ENCODE measurements at regions of chr11 and their contacts with region 1.

Region 1: DNA sequence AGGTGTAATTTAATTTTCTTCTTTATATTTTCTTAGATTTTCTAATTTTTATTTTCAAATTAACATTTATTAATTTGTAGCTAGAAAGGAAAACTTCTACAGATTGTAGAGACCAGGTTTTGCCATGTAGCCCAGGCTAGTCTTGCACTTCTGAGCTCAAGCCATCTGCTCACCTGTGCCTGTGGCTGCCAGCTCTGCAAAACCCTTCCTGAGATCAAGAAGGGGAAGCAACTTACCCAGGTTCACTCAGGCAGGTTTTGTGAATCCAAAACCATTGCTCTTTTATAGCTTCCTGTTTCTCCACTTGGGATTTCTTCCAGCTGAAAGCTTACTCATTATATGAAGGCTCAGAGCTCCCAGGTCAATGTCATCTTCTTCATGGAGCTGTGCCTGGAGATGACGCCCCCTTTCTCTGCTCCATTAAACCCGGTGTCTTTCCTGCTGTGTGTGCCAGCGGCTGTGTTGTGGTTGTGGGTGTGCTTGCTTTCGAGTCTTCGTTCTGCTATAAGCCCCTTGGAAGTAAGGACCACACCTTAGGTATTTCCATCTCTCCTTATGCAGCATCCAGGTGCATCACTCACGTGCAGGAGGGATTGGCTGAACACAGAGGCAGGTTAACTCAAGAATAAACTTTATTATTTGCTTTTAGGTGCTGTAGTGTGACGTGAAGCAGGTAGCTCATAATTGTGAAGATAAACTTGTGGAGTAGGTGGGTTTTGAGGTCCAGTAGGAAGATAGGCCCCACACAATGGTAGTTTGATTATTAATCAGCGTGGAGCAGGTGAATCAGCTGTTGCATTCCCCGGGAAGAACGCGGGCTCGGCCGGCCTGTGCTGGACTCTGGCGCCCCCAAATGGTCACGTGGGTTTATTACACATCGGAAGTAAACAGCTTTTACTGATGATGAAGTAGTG is 42.2 kb upstream of the INCENP start:
- DNase-seq: peak; percentile 62 to 85 (median 77)
- ATAC-seq: peak; percentile 96
- H3K4me3 ChIP-seq: no peak overlapping the region
- H3K4me3 Mint-ChIP-seq: peak overlapping the region in 9 of 10 donors; percentile 40 to 70 (median 55)
- H3K27ac ChIP-seq: no peak overlapping the region
- H3K27ac Mint-ChIP-seq: peak overlapping the region in 6 of 9 donors; percentile 10 to 91 (median 76)
- H3K4me1 ChIP-seq: peaks cover 0 to 7% of the 10 kb centered on the region in 2 donors
- H3K4me1 Mint-ChIP-seq: peaks cover 0 to 13% (median 6%) of the 10 kb centered on the region in 7 donors
- H3K27me3 ChIP-seq: no peaks in the 10 kb centered on the region
- H3K27me3 Mint-ChIP-seq: peaks cover 0 to 9% (median 0%) of the 10 kb centered on the region in 5 donors

Region 2: GRCh38 chr11:61871158-61871597 is 210.5 kb before region 1 on chr11:
- CTCF ChIA-PET with region 1: interaction called, 4 read pairs
- POLR2A ChIA-PET with region 1: no interaction called
- intact Hi-C with region 1: loop called in 1 of 2 experiments (anchors 1 kb)
- DNase-seq: peak; percentile 23 to 77 (median 50)
- ATAC-seq: peak; percentile 94
- H3K4me3 ChIP-seq: no peak overlapping the region
- H3K4me3 Mint-ChIP-seq: peak overlapping the region; percentile 34 to 87 (median 70)
- H3K27ac ChIP-seq: no peak overlapping the region
- H3K27ac Mint-ChIP-seq: peak overlapping the region in 3 of 9 donors; percentile 43 to 52 (median 46)
- H3K4me1 ChIP-seq: no peaks in the 10 kb centered on the region
- H3K4me1 Mint-ChIP-seq: peaks cover 0 to 8% (median 5%) of the 10 kb centered on the region in 7 donors
- H3K27me3 ChIP-seq: no peaks in the 10 kb centered on the region
- H3K27me3 Mint-ChIP-seq: peaks cover 0 to 8% (median 0%) of the 10 kb centered on the region in 5 donors

Region 3: GRCh38 chr11:61899146-61899841 is 182.3 kb before region 1 on chr11:
- CTCF ChIA-PET with region 1: interaction called, 206 read pairs
- POLR2A ChIA-PET with region 1: interaction called, 5 read pairs
- intact Hi-C with region 1: loop called (anchors 1 kb)
- DNase-seq: peak; percentile 88 to 98 (median 93)
- ATAC-seq: peak; percentile 98
- H3K4me3 ChIP-seq: no peak overlapping the region
- H3K4me3 Mint-ChIP-seq: no peak overlapping the region
- H3K27ac ChIP-seq: no peak overlapping the region
- H3K27ac Mint-ChIP-seq: peak overlapping the region; percentile 55 to 93 (median 69)
- H3K4me1 ChIP-seq: peaks cover 4% of the 10 kb centered on the region in 2 donors
- H3K4me1 Mint-ChIP-seq: peaks cover 4 to 7% (median 5%) of the 10 kb centered on the region in 7 donors
- H3K27me3 ChIP-seq: no peaks in the 10 kb centered on the region
- H3K27me3 Mint-ChIP-seq: peaks cover 0 to 4% (median 0%) of the 10 kb centered on the region in 5 donors

Region 4: DNA sequence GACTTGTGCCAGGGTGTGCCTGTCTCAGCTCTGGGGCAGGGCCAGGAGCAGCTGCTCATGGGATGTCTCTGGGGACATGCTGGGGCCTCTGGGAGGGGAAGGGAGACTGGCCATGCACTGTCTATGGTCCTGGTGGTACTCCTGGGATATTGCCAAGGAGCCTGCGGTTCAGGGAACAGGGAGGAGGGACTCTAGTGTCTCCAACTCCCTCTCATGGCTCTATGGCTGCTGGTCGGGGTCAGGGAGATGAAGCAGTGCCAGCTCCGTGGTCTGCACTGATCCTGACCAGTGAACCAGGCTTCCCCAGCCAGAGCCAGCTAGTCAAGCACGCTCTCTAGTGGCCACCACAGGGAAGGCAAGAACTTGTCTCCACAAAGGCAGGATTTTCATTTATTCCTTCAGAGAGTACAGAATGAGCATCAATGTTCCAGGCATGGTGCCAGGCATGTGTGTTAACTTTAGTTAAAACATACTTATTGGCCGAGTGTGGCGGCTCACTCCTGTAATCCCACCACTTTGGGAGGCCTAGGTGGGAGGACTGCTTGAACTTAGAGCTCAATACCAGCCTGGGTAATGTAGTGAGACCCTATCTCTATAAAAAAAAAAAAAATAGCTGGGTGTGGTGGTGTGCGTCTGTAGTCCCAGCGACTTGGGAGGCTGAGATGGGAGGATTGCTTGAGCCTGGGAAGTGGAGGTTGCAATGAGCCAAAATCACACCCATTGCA is 134.0 kb before region 1 on chr11:
- CTCF ChIA-PET with region 1: interaction called, 34 read pairs
- POLR2A ChIA-PET with region 1: interaction called, 3 read pairs
- intact Hi-C with region 1: loop called (anchors 1 to 2 kb)
- DNase-seq: peak; percentile 41 to 64 (median 47)
- ATAC-seq: peak; percentile 88
- H3K4me3 ChIP-seq: no peak overlapping the region
- H3K4me3 Mint-ChIP-seq: no peak overlapping the region
- H3K27ac ChIP-seq: no peak overlapping the region
- H3K27ac Mint-ChIP-seq: peak overlapping the region in 2 of 9 donors; percentile 14 to 70
- H3K4me1 ChIP-seq: peaks cover 0 to 3% of the 10 kb centered on the region in 2 donors
- H3K4me1 Mint-ChIP-seq: peaks cover 0 to 5% (median 0%) of the 10 kb centered on the region in 7 donors
- H3K27me3 ChIP-seq: no peaks in the 10 kb centered on the region
- H3K27me3 Mint-ChIP-seq: peaks cover 0 to 6% (median 3%) of the 10 kb centered on the region in 5 donors

Region 5: DNA sequence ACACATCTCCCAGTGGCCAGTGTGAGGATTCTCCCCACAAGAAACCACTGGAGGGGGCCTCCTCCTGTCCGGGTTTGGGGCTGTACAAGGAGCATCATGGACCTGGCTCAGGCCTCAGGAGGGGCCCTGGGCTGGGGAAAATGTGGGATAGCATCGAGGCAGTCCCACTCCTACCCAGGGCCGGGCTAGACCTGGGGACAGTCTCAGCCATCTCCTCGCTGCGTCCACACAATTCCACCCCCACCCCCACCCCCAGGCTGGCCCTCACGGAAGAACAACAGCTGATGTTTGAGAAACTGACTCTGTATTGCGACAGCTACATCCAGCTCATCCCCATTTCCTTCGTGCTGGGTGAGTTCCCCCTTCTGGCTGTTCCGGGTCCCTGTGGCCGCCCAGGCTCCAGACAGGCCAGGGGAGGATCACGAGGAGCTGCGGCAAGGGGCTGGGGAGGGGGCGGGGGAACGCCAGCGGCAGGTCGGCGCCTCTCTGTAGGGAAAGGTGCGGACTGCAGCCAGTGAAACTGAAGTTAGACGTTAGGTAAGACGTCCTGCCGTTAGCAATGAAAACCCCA is 126.7 kb before region 1 on chr11:
- CTCF ChIA-PET with region 1: interaction called, 12 read pairs
- POLR2A ChIA-PET with region 1: interaction called, 3 read pairs
- intact Hi-C with region 1: loop called in 1 of 2 experiments (anchors 2 kb)
- DNase-seq: no peak
- ATAC-seq: peak; percentile 80
- H3K4me3 ChIP-seq: no peak overlapping the region
- H3K4me3 Mint-ChIP-seq: peak overlapping the region in 8 of 10 donors; percentile 28 to 70 (median 58)
- H3K27ac ChIP-seq: no peak overlapping the region
- H3K27ac Mint-ChIP-seq: no peak overlapping the region
- H3K4me1 ChIP-seq: no peaks in the 10 kb centered on the region
- H3K4me1 Mint-ChIP-seq: peaks cover 0 to 13% (median 3%) of the 10 kb centered on the region in 7 donors
- H3K27me3 ChIP-seq: peaks cover 0 to 5% of the 10 kb centered on the region in 2 donors
- H3K27me3 Mint-ChIP-seq: peaks cover 6 to 25% (median 8%) of the 10 kb centered on the region in 5 donors

Region 6: GRCh38 chr11:61972672-61973475 is 108.8 kb before region 1 on chr11:
- CTCF ChIA-PET with region 1: interaction called, 12 read pairs
- POLR2A ChIA-PET with region 1: interaction called, 27 read pairs
- intact Hi-C with region 1: loop called in 1 of 2 experiments (anchors 5 kb)
- DNase-seq: peak in 3 of 9 donors; percentile 24 to 52 (median 28)
- ATAC-seq: peak; percentile 33
- H3K4me3 ChIP-seq: no peak overlapping the region
- H3K4me3 Mint-ChIP-seq: peak overlapping the region in 5 of 10 donors; percentile 21 to 70 (median 38)
- H3K27ac ChIP-seq: peak overlapping the region; percentile 57
- H3K27ac Mint-ChIP-seq: peak overlapping the region; percentile 17 to 89 (median 80)
- H3K4me1 ChIP-seq: peaks cover 0 to 18% of the 10 kb centered on the region in 2 donors
- H3K4me1 Mint-ChIP-seq: peaks cover 25 to 54% (median 44%) of the 10 kb centered on the region in 7 donors
- H3K27me3 ChIP-seq: no peaks in the 10 kb centered on the region
- H3K27me3 Mint-ChIP-seq: no peaks in the 10 kb centered on the region

Region 7: GRCh38 chr11:62025487-62026105 is 56.0 kb before region 1 on chr11:
- CTCF ChIA-PET with region 1: interaction called, 21 read pairs
- POLR2A ChIA-PET with region 1: interaction called, 9 read pairs
- intact Hi-C with region 1: loop called in 1 of 2 experiments (anchors 1 kb)
- DNase-seq: peak; percentile 45 to 97 (median 93)
- ATAC-seq: peak; percentile 91
- H3K4me3 ChIP-seq: peak overlapping the region; percentile 11
- H3K4me3 Mint-ChIP-seq: peak overlapping the region; percentile 68 to 84 (median 76)
- H3K27ac ChIP-seq: peak overlapping the region; percentile 93
- H3K27ac Mint-ChIP-seq: peak overlapping the region; percentile 95 to 100 (median 99)
- H3K4me1 ChIP-seq: peaks cover 9 to 17% of the 10 kb centered on the region in 2 donors
- H3K4me1 Mint-ChIP-seq: peaks cover 6 to 28% (median 24%) of the 10 kb centered on the region in 7 donors
- H3K27me3 ChIP-seq: no peaks in the 10 kb centered on the region
- H3K27me3 Mint-ChIP-seq: no peaks in the 10 kb centered on the region

Measured in naive thymus-derived CD4-positive, alpha-beta T cell (primary cell).